H1 (cell line): ENCODE measurements at regions of chr17 and their contacts with region 1.

Region 1: GRCh38 chr17:34156741-34157589 is 98.1 kb upstream of the CCL2 start:
- DNase-seq: peak in 1 of 2 experiments; percentile 79
- H3K4me3 ChIP-seq: peak overlapping the region; percentile 41 to 66 (median 52)
- H3K27ac ChIP-seq: peak overlapping the region; percentile 82
- H3K4me1 ChIP-seq: peaks cover 19 to 40% (median 27%) of the 10 kb centered on the region in 4 experiments
- H3K27me3 ChIP-seq: peaks cover 0 to 15% (median 12%) of the 10 kb centered on the region in 4 experiments; a peak in 3 of 7 replicates
- CTCF ChIP-seq: no peak
- EP300 ChIP-seq: no peak
- POLR2A ChIP-seq: peak in 1 of 2 experiments; percentile 81; a peak in 2 of 3 replicates
- RAD21 ChIP-seq: no peak

Region 2: GRCh38 chr17:33908363-33909064 is 248.5 kb before region 1 on chr17:
- CTCF ChIA-PET with region 1: no interaction called
- POLR2A ChIA-PET with region 1: no interaction called
- DNase-seq: no peak
- H3K4me3 ChIP-seq: no peak overlapping the region
- H3K27ac ChIP-seq: no peak overlapping the region
- H3K4me1 ChIP-seq: no peaks in the 10 kb centered on the region
- H3K27me3 ChIP-seq: no peaks in the 10 kb centered on the region
- CTCF ChIP-seq: no peak
- EP300 ChIP-seq: no peak
- POLR2A ChIP-seq: no peak
- RAD21 ChIP-seq: no peak

Region 3: GRCh38 chr17:33927732-33928133 is 229.2 kb before region 1 on chr17:
- CTCF ChIA-PET with region 1: interaction called, 10 read pairs
- POLR2A ChIA-PET with region 1: interaction called, 6 read pairs
- DNase-seq: no peak
- H3K4me3 ChIP-seq: no peak overlapping the region
- H3K27ac ChIP-seq: no peak overlapping the region
- H3K4me1 ChIP-seq: peaks cover 6 to 29% (median 18%) of the 10 kb centered on the region in 4 experiments
- H3K27me3 ChIP-seq: peaks cover 0 to 2% (median 0%) of the 10 kb centered on the region in 4 experiments; a peak in 1 of 7 replicates
- CTCF ChIP-seq: peak in 2 of 3 experiments; percentile 43 to 50; a peak in 2 of 4 replicates
- EP300 ChIP-seq: no peak
- POLR2A ChIP-seq: no peak
- RAD21 ChIP-seq: peak; percentile 62 to 74

Region 4: GRCh38 chr17:34081269-34081668 is 75.7 kb before region 1 on chr17:
- CTCF ChIA-PET with region 1: interaction called, 91 read pairs
- POLR2A ChIA-PET with region 1: no interaction called
- DNase-seq: peak in 1 of 2 experiments; percentile 57
- H3K4me3 ChIP-seq: no peak overlapping the region
- H3K27ac ChIP-seq: no peak overlapping the region
- H3K4me1 ChIP-seq: peaks cover 0 to 9% (median 2%) of the 10 kb centered on the region in 4 experiments; a peak in 4 of 7 replicates
- H3K27me3 ChIP-seq: no peaks in the 10 kb centered on the region
- CTCF ChIP-seq: peak; percentile 32 to 82 (median 81)
- EP300 ChIP-seq: no peak
- POLR2A ChIP-seq: no peak
- RAD21 ChIP-seq: peak; percentile 72 to 79

Region 5: GRCh38 chr17:34133350-34133749 is 23.6 kb before region 1 on chr17:
- CTCF ChIA-PET with region 1: interaction called, 3 read pairs
- POLR2A ChIA-PET with region 1: interaction called, 12 read pairs
- DNase-seq: no peak
- H3K4me3 ChIP-seq: no peak overlapping the region
- H3K27ac ChIP-seq: no peak overlapping the region
- H3K4me1 ChIP-seq: peaks cover 2 to 15% (median 10%) of the 10 kb centered on the region in 4 experiments
- H3K27me3 ChIP-seq: no peaks in the 10 kb centered on the region
- CTCF ChIP-seq: no peak
- EP300 ChIP-seq: no peak
- POLR2A ChIP-seq: no peak
- RAD21 ChIP-seq: no peak

Region 6: GRCh38 chr17:34171245-34171818 is 14.4 kb after region 1 on chr17:
- CTCF ChIA-PET with region 1: interaction called, 58 read pairs
- POLR2A ChIA-PET with region 1: interaction called, 36 read pairs
- DNase-seq: peak in 1 of 2 experiments; percentile 82
- H3K4me3 ChIP-seq: no peak overlapping the region
- H3K27ac ChIP-seq: no peak overlapping the region
- H3K4me1 ChIP-seq: no peaks in the 10 kb centered on the region
- H3K27me3 ChIP-seq: no peaks in the 10 kb centered on the region
- CTCF ChIP-seq: peak; percentile 69 to 90 (median 80)
- EP300 ChIP-seq: no peak
- POLR2A ChIP-seq: no peak
- RAD21 ChIP-seq: peak; percentile 49 to 69

Region 7: DNA sequence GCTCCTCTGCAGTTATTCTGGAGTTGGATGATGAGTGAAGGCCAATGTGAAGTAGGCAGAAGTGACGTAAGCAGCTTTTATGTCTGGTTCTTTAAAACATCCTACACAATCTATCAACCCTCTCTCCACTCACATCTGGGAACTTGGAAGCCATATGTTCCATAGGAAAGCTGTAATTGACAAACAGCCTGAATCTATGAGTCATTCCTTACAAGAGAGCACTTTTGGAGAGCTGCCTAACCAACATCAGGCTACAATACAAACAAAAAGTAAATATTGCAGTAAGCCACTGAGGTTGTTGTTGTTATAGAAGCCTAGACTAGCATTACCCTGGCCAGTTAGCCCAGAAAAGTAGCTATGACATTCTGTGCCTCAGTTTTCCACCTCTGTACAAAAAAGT is 118.9 kb after region 1 on chr17:
- CTCF ChIA-PET with region 1: no interaction called
- POLR2A ChIA-PET with region 1: no interaction called
- DNase-seq: no peak
- H3K4me3 ChIP-seq: no peak overlapping the region
- H3K27ac ChIP-seq: no peak overlapping the region
- H3K4me1 ChIP-seq: no peaks in the 10 kb centered on the region; a peak in 1 of 7 replicates
- H3K27me3 ChIP-seq: no peaks in the 10 kb centered on the region
- CTCF ChIP-seq: no peak
- EP300 ChIP-seq: no peak
- POLR2A ChIP-seq: no peak
- RAD21 ChIP-seq: no peak